Posterior cingulate gyrus (tissue), 11 donors: ENCODE measurements at regions of chr5 and their contacts with region 1.

Region 1: DNA sequence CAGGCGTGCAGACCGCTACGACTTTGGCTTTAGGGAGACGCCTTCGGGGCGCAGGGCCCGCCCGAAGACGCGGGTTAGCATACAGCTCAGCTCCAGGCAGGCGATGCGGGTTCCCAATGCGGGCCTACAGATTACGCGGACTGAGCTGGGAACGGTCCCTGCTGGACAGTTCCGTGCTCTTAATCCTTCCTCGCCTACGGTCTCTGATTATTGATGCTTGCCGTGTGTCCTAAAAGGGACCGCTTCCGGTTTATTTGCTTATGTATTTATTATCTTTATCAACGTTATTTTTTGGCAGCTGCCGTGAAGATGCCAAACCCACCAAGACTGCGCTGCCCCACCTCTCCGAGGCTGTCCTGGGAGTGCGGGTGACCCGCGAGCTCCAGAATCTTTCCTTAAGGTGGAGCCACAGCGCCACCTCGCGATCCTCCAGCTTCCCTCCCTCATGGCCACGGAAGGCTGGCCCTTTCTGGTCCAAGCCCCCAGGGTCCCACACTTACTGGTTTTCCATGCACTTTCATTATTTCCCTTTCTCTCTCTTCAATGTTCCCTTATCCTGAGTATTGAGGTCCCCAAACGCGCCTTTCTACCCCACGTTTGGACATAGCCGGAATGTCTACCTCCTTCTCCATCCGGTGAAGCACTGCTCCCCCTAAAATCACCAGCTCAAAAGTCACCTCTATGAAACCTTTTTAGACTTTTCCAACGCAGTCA is 7.0 kb upstream of the EBF1 start:
- DNase-seq: peak in 9 of 10 donors; percentile 53 to 94 (median 76)

Region 2: DNA sequence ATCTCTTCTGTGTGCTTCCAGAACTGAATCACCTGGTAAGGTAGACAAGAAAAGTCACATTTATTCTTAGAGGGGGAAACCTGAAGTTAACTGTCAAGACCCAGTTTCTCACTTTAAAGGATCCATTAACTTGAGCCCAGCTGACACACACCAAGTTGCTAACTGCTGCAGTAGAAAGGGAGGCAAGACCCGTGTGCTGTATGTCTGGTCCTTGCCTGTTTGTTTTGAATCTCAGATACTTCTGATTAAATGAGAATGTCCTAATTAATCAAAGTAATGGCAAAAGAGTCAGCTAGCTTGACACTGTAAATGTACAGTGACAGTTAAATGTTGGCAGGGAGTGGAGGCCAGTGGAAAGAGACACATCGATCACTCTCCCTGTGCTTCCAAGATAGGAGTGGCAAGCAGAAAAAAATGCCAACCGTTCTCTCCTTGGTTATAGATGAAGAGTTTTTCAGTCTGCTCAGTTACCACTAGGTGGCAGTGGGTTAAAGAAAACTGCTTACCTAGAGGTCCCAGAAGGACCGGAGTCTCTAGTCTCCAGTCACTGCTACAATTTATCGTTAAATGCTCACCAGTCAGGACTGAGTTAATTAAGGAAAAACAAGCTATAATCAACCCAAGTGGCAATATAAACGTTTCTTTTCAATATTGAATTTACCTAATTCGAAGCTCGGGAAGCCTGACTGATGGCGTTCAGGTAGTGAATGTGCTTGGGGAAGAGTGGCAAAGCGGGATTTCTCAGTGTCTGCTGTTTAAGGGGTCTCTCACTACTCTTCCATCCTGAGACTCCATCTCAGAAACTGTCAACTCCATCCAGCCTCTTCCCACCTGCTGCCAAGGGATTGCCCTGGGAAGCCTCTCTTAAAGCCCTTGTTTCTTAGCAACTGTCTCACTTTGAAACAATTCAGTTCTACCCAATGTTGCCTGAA is 1344.8 kb before region 1 on chr5:
- intact Hi-C with region 1: loop called (anchors 2 kb)
- DNase-seq: no peak

Region 3: DNA sequence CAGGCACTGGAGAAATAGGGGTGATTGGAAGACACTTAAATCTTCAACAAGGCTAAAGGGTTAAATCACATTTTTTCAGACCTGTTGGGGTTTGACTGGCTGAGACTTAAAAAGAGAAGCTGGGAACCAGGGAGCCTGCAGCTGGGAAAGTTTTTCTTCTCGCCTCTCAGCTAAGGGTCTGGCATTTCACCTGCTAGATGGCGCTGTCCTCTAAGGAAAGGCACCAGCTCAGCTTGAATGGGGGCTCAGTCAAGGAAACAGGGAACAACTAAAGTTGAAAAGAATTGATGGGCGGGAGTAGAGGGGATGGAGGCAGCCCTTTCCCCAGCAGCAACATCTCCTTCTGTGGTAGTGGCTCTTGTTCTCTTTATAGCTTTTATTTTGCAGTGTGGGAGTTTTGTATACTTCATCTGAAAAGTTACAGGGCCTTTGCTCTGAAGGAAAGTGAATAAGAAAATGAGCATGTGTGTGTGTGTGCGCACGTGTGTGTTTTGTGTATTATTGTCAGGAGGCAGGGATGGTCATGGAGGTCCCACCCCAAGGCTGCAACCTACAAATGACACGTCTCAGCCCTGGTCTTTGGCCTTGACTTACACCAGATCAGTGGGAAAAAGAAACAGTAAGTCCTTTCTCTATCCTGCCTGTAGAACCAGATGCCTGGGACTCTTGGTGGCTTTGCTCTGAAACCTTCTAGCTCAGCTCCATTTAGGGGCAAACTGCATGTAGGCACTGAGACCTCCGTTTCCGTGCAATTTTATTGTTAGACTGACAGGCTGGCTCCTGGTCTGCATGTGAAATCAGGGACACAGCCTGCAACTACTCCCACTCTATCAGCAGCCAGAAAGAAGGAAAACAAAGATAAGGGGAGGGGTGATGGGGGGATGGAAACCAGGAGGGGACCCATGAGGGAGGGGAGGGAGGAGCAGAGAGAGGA is 931.5 kb before region 1 on chr5:
- intact Hi-C with region 1: loop called (anchors 1 kb)
- DNase-seq: peak in 8 of 10 donors; percentile 32 to 93 (median 70)

Region 4: GRCh38 chr5:158695595-158696330 is 411.0 kb before region 1 on chr5:
- intact Hi-C with region 1: loop called (anchors 1 kb)
- DNase-seq: peak; percentile 38 to 96 (median 80)

Region 5: DNA sequence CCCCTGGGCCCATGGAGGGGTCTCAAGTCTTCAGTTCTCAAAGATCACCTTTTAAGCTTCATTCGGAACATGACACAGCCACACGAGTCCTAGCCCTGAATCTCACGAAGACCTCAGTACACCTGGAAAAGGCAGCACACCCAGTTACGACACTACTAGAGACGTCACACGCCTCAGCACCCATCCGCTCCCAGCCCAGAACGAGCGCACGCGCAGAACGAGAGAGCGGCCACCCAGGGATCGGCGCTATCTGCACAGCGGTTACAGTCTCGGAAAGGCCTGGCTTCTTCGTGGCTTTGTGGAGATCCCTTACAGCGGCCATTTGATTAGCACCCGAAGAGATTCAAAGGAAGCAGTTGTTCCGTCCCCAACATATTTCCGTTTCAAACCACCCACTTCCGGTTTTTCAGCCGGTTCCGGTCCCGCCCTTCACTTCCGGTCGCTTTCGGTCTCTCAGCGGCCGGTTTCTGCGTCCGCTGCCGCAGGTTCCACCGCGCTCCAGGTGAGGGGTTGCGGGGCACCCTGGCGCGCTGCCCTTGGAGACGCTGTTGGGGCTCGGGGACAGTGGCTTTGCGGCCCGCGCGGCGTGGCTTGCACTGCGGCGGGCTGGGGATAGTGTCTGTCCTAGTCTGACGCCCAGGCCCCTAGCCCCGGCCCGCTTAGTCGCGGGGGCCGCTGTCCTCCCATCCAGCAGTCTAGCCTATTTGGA is 156.3 kb after region 1 on chr5 and contains the start of gene UBLCP1:
- intact Hi-C with region 1: no loop called
- DNase-seq: peak; percentile 65 to 96 (median 80)